Cardiac septum (tissue), 1 donor: ENCODE measurements at regions of chr1 and their contacts with region 1.

Region 1: DNA sequence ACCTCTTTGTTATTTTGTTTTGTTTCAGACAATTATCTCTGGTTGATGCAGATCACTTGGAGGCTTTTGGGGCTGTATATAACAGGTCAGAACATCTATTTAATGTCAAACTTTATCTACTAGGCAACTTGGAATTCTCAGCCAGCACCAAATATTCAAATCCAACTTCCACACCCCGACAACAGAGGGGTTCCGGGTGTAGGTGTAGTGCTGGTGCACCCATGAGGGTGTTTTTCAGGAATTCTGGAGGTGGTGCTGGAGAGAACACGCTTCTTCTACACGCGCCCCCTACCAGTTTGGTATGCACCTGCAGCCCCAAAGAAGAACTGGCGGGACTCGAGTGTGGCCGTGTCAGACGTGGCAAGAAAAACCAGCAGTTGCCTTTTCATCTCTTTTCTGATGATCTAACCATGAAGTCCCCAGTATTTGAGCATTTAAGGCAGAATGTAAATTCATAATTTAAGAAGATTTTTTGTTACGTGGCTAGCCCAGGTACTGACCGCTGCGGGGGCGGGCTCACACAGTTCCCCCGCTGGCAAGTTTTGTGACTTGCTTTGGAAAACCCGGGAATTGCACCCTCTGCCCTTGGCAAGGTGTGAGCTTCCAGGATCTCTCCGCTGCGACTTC is 462 bp upstream of the TLCD4 start:
- DNase-seq: peak; percentile 81

Region 2: DNA sequence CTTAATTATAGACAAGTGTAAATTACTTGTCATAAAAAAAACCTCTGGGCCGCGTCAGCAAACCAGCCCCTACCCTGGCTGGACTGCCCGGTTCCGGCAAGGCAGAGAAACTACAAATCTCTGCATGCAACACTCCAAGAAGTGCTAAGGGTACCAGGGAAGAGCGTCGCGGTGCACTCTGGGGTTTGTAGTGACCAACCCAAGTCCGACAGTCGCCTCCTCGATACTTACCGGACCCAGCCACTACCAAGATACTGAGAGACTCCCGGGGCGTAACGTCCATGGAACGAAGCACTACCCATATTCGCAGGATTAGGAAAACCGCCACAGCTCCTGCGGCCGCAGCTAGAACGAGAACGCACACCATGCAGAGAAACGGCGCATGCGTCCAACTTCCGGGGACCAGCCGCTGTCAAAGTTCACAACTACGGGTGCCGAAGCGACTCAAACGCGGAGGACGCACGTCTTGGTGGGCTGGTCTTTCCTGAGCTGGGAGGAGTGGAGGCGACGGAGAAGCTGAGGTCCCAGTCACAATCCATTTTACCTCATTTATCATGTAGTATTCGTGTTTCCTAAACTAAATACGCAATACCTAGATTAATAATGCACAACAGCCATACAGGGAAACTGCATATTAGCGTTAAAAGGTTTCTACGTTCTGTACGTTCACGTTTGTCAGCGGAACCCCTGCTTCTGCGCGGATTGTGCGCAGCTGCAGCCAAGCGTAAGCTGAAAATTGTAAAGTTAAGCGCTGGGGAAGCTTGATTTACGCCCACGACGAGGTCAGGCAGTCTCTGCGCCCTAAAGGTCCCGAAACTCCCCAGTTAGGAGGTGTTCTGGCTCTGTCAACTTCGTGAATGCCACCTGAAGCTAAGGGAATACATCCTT is 43.9 kb before region 1 on chr1 and contains the start of gene ALG14:
- intact Hi-C with region 1: loop called (anchors 5 kb)
- DNase-seq: peak; percentile 96
- total RNA-seq, gene ALG14: 4.7 TPM

Region 3: DNA sequence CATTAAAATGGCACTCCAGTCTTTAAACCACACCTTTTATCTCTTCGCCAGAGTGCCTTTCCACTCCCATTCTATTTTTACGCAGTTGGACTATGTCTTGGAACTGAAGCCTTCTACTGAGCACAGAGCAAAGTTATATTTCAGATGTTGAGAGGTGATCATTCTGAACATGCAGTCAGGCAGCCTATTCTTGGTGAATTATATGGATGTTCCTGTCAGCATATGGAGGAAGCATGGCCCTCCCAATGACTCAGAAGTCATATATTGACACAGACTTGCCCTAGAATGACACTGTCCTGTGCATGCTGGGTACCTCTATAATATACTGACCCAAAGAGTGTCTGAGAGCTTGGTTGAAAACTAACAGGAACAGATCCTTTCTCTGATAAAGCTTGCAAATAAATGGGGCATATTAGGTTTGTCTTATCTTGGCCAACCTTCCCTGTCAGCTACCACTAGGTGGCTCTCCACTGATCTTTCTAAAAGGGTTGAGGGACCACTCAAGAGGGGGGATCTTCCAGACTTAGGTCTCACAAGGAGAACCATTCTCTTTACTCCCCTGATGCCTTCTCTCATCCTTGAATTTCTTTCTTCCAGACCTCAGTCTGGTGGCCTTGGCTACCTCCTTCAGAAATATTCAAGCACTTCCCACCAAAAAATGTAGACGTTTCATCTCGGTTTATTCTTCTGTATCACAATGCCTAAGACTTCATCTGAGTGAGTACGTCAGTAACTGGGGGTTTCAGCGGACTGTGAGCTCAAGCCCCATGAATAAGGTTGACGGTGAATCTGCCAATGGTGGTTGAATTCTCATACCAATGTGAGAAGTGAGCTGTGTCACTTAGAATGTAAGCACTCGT is 32.1 kb before region 1 on chr1:
- intact Hi-C with region 1: loop called (anchors 2 kb)
- DNase-seq: no peak